ENCODE measurements at regions of chr10 and their contacts with region 1.

Region 1: DNA sequence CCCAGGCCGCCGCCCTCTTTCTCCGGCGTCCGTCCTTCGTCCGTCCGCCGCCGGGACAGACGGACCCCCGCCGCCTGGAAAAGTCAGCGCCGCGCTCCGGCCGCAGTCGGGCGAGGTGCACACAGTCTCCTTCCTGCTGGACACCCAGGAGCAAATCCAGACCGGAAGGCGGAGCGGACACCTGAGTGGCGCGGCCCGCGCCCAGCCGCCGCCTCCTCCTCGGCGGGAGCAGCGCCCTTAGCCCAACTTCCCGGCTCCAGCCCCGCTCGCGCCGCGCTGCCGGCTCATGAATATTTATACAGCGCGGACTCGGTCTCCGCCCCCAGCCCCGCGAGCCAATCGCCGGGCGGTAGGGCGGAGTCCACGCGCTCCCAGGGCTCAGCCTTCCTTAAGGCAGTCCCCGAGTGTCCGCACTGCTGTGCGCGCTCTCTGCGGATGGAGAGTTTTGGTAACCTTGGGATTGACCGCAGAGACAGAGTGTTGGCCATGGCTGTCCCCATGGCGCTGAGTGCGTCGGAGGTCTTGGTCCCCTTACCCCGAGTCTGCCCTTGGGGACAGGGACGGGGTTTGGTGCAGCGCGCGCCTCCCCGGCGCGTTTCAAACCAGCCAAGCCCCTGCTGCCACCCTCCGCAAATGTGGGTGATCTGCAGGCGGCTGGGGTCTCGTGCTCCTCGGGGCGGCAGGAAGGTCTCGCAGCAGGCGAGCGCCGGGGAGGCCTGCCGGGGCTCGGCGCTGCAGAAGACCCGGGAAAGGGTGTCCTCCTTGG is at the start of gene FZD8:
- DNase-seq: peak; percentile 90
- ATAC-seq: peak; percentile 83
- H3K4me3 ChIP-seq: peak within 1 kb of the TSS; percentile 62
- H3K27ac ChIP-seq: peak within 1 kb of the TSS; percentile 56; the same call in 1 of the 2 replicates
- H3K4me1 ChIP-seq: peaks cover 7% of the 10 kb centered on the region
- H3K27me3 ChIP-seq: 0 out of 2 replicates have a peak, but pooled peaks cover 2% of the 10 kb centered on the region
- CTCF ChIP-seq: peak; percentile 24; the same call in 1 of the 2 replicates
- POLR2A ChIP-seq: peak; percentile 99
- RAD21 ChIP-seq: 0 out of 2 replicates have a peak, but pooled peaks have one; percentile 10
- total RNA-seq, gene FZD8: 3.6 and 4.4 TPM in 2 replicates

Region 2: DNA sequence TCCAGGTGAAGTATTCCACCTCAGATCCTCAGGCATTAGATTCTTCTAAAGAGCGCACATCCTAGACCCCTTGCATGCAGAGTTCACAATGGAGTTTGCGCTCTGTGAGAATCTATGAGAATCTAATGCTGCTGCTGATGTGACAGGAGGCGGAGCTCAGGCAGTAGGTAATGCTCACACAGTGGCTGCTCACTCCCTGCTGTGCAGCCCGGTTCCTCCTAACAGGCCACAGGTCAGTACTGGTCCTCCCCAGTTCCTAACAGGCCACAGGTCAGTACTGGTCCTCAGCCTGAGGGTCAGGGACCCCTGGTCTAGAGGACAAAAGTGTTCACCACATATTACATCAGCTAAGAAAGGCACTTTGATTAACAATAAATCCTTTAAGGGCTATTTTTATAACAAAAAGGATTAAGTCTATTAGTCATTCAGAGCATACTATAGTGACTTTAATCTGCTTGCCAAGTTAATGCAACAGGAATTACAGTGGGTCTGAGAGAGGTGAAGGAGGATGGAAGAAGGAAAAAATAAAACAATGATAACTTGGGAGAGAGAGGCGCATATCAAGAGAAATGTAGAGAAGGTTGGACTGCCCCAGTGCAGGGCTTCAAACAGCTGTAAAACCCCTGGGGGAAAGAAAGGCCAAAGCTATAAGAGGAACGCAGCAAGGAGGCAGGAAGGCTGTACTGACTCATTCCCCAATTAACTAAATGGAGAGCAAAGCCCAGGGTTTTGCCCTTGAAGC is 601.3 kb before region 1 on chr10:
- CTCF ChIA-PET with region 1: no interaction called
- POLR2A ChIA-PET with region 1: no interaction called
- dilution Hi-C with region 1: no loop called
- in situ Hi-C with region 1: no loop called
- intact Hi-C with region 1: no loop called
- DNase-seq: peak; percentile 63
- ATAC-seq: peak; percentile 70
- H3K4me3 ChIP-seq: no peak overlapping the region
- H3K27ac ChIP-seq: peak overlapping the region; percentile 21
- H3K4me1 ChIP-seq: peaks cover 18% of the 10 kb centered on the region
- H3K27me3 ChIP-seq: no peaks in the 10 kb centered on the region
- CTCF ChIP-seq: no peak
- POLR2A ChIP-seq: no peak
- RAD21 ChIP-seq: no peak

Region 3: DNA sequence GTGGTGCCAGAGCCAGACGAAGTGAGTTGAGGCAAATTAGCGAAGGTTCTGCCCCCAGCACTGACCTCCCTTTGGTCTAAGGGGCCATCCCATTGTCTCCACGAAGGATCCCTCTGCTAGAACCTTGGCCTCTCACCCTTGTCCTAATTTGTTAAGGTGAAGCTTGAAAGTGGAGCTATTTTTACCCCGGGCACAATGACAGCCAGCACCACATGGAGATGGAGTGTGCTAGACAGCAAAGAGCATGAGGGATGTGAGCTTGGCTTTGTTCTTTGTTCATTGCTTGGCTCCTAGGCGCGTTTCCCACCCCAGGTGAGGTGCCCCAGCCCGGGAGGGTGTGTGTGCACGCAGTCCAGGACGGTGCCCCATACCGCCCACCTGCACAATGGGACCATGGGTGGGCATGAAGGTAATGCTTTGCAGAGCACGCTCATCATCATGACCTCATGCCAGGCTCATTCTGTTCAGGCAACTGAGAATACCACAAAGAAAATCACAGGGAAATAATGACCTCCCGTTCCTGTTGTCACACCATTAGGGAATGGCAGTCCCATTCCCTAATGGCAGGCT is 360.9 kb after region 1 on chr10:
- CTCF ChIA-PET with region 1: no interaction called
- POLR2A ChIA-PET with region 1: no interaction called
- dilution Hi-C with region 1: no loop called
- in situ Hi-C with region 1: no loop called
- intact Hi-C with region 1: loop called (anchors 5 kb)
- DNase-seq: no peak
- ATAC-seq: no peak
- H3K4me3 ChIP-seq: no peak overlapping the region
- H3K27ac ChIP-seq: no peak overlapping the region
- H3K4me1 ChIP-seq: no peaks in the 10 kb centered on the region
- H3K27me3 ChIP-seq: no peaks in the 10 kb centered on the region; the same call in none of the 2 replicates
- CTCF ChIP-seq: no peak
- POLR2A ChIP-seq: no peak
- RAD21 ChIP-seq: no peak

Region 4: DNA sequence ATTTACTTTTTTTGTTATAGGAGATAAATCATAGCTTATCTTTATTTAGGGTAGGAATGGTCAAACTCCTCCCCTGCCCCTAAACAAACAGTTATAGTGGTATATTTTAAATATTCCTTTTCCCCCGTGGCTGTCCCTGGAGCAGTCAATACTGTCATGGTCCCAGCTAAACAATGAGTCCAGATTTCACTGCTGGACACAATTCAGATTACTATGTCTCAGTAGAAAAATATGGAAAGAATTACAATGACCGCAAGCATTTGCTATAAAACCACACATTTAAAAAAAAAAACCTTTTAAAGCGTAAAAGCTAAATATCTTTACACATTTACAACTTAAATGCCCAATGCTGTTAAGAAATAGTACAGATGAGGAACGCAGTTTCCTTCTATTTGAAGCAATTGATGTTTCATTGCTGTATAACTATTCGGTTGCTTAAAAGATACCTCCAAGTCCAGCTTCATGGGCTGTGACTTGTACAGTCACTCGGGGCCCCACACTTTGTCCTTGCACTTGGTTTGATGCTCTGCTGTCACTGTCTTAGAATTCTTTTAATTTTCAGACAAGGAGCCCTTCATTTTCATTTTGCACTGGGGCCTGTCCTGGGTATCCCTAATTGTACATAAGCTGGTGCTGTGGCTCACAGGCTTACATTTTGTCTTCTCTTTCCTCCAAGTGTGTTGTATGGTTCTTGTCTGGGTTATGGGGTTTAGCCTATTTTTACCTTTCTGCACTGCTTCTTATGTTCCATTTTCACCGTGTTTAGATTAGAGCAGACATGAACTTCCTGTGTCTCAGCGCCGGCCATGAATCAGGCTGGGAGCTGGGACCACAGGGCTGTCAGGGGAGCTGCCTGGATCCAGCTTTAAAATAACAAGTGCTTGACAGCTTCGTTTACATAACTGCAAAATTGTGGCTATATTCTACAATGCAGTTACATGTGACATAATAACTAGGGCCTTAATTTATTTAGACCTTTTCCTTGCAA is 530.0 kb after region 1 on chr10:
- CTCF ChIA-PET with region 1: no interaction called
- POLR2A ChIA-PET with region 1: no interaction called
- dilution Hi-C with region 1: no loop called
- in situ Hi-C with region 1: no loop called
- intact Hi-C with region 1: loop called (anchors 5 kb)
- DNase-seq: peak; percentile 85
- ATAC-seq: peak; percentile 87
- H3K4me3 ChIP-seq: peak overlapping the region; percentile 4; the same call in 1 of the 2 replicates
- H3K27ac ChIP-seq: peak overlapping the region; percentile 60
- H3K4me1 ChIP-seq: peaks cover 5% of the 10 kb centered on the region
- H3K27me3 ChIP-seq: no peaks in the 10 kb centered on the region
- CTCF ChIP-seq: no peak
- POLR2A ChIP-seq: no peak
- RAD21 ChIP-seq: no peak

Region 5: DNA sequence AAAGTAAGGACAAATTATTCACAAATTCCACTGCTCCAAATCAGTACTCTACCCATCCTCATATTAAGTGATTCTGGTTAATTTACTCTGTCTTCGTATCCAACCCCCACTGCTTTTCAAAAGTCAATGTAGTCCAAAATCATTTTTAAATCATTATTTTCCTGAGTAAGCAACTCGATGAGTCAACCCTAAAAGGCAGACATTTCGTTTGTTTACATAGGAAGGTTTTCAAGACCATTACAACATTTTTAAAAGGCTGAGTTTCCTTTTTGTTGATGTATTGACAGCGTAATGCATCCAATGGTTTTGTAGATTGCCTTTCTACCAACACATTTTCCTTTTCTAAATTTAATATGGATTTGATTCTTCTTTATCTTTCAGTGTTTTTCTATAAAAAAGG is 960.2 kb after region 1 on chr10:
- CTCF ChIA-PET with region 1: no interaction called
- POLR2A ChIA-PET with region 1: no interaction called
- dilution Hi-C with region 1: no loop called
- in situ Hi-C with region 1: no loop called
- intact Hi-C with region 1: loop called (anchors 10 kb)
- DNase-seq: peak; percentile 85
- ATAC-seq: peak; percentile 73
- H3K4me3 ChIP-seq: no peak overlapping the region
- H3K27ac ChIP-seq: no peak overlapping the region
- H3K4me1 ChIP-seq: peaks cover 3% of the 10 kb centered on the region; the same call in 1 of the 2 replicates
- H3K27me3 ChIP-seq: no peaks in the 10 kb centered on the region
- CTCF ChIP-seq: no peak
- POLR2A ChIP-seq: no peak
- RAD21 ChIP-seq: no peak

Measured in IMR-90 (cell line).